ENCODE measurements at regions of chr7 and their contacts with region 1.

Region 1: GRCh38 chr7:140517546-140518369 is 38.5 kb upstream of the MKRN1 start:
- DNase-seq: peak; percentile 79
- H3K4me3 ChIP-seq: no peak overlapping the region
- H3K27ac ChIP-seq: no peak overlapping the region
- H3K4me1 ChIP-seq: no peaks in the 10 kb centered on the region
- H3K27me3 ChIP-seq: no peaks in the 10 kb centered on the region
- CTCF ChIP-seq: peak; percentile 77 to 92
- POLR2A ChIP-seq: no peak

Region 2: GRCh38 chr7:140209866-140210609 is 307.7 kb before region 1 on chr7:
- CTCF ChIA-PET with region 1: no interaction called
- POLR2A ChIA-PET with region 1: no interaction called
- dilution Hi-C with region 1: no loop called
- intact Hi-C with region 1: no loop called
- DNase-seq: no peak
- H3K4me3 ChIP-seq: no peak overlapping the region
- H3K27ac ChIP-seq: no peak overlapping the region
- H3K4me1 ChIP-seq: no peaks in the 10 kb centered on the region
- H3K27me3 ChIP-seq: peaks cover 4 to 6% of the 10 kb centered on the region in 2 experiments
- CTCF ChIP-seq: no peak
- POLR2A ChIP-seq: no peak

Region 3: DNA sequence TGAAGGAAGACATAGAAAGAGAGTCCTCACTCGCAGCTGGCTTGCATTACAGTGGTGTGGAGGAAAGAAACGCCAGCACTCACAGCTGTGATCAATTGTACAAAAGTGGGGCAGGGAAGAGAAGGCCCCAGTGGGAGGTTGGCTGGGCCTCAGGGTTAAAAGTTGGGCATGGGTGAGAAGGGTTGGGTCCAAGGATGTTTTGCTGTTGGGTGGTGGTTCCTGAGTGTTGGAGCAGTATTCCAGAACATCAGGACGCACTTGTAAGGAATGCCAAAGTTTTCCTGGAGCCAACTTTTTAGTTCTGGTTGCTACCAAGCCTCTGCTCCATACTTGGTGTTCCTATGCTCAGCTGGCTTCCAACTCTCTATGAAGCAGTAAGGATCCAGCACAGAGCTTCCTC is 17.0 kb after region 1 on chr7:
- CTCF ChIA-PET with region 1: interaction called, 17 read pairs
- POLR2A ChIA-PET with region 1: no interaction called
- dilution Hi-C with region 1: no loop called
- intact Hi-C with region 1: no loop called
- DNase-seq: no peak
- H3K4me3 ChIP-seq: no peak overlapping the region
- H3K27ac ChIP-seq: no peak overlapping the region
- H3K4me1 ChIP-seq: no peaks in the 10 kb centered on the region
- H3K27me3 ChIP-seq: no peaks in the 10 kb centered on the region
- CTCF ChIP-seq: no peak
- POLR2A ChIP-seq: no peak

Region 4: DNA sequence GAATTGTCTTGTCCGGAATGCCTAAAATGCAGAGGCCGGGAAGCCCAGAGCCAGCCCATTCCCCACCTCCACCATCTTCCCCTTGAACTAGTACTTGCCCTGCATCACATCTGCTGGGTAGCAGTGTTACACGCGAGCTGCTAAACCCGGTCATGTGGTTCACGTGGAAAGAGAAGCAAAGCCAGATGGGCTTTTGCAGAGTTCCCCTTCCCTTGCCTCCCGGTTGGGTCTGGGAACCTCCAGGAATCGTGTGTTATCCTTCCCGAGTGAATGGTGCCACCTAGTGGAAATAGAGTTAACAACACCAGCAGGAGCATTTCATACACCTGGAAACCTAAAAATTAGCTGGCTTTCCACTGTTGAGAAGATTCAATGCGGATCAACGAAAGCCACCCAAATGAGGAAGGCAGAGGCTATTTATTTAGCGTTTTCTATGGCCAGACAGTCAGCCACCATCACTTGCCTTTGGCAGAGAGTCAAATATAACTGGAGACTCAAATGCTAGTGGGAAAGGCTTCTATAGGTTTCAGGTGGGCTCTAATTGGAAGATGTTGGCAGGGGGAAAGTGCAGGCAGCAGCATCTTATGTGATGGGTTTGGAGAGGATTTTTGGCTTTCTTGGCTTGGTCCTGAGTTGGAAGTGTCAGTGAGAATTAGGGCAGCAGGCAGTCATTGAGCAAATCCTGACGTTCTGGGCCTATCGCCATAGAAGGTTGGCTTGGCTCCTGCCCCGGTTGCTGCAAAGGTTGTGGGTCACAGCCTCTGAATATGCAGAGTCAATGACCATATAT is 135.8 kb after region 1 on chr7:
- CTCF ChIA-PET with region 1: interaction called, 202 read pairs
- POLR2A ChIA-PET with region 1: no interaction called
- dilution Hi-C with region 1: no loop called
- intact Hi-C with region 1: loop called (anchors 1 kb)
- DNase-seq: peak; percentile 62
- H3K4me3 ChIP-seq: no peak overlapping the region
- H3K27ac ChIP-seq: no peak overlapping the region
- H3K4me1 ChIP-seq: peaks cover 8% of the 10 kb centered on the region
- H3K27me3 ChIP-seq: no peaks in the 10 kb centered on the region
- CTCF ChIP-seq: peak; percentile 65 to 74
- POLR2A ChIP-seq: no peak

Region 5: GRCh38 chr7:140661121-140661520 is 143.4 kb after region 1 on chr7:
- CTCF ChIA-PET with region 1: interaction called, 18 read pairs
- POLR2A ChIA-PET with region 1: no interaction called
- dilution Hi-C with region 1: no loop called
- intact Hi-C with region 1: no loop called
- DNase-seq: no peak
- H3K4me3 ChIP-seq: no peak overlapping the region
- H3K27ac ChIP-seq: no peak overlapping the region
- H3K4me1 ChIP-seq: peaks cover 3% of the 10 kb centered on the region
- H3K27me3 ChIP-seq: peaks cover 2 to 4% of the 10 kb centered on the region in 2 experiments
- CTCF ChIP-seq: no peak
- POLR2A ChIP-seq: no peak

Region 6: GRCh38 chr7:140983802-140984201 is 466.0 kb after region 1 on chr7:
- CTCF ChIA-PET with region 1: interaction called, 17 read pairs
- POLR2A ChIA-PET with region 1: no interaction called
- dilution Hi-C with region 1: no loop called
- intact Hi-C with region 1: loop called (anchors 1 kb)
- DNase-seq: no peak
- H3K4me3 ChIP-seq: no peak overlapping the region
- H3K27ac ChIP-seq: no peak overlapping the region
- H3K4me1 ChIP-seq: no peaks in the 10 kb centered on the region
- H3K27me3 ChIP-seq: no peaks in the 10 kb centered on the region
- CTCF ChIP-seq: peak in 1 of 2 donors; percentile 3
- POLR2A ChIP-seq: no peak

Measured in endothelial cell of umbilical vein (primary cell).